K562 (cell line): ENCODE measurements at regions of chr12 and their contacts with region 1.

Region 1: DNA sequence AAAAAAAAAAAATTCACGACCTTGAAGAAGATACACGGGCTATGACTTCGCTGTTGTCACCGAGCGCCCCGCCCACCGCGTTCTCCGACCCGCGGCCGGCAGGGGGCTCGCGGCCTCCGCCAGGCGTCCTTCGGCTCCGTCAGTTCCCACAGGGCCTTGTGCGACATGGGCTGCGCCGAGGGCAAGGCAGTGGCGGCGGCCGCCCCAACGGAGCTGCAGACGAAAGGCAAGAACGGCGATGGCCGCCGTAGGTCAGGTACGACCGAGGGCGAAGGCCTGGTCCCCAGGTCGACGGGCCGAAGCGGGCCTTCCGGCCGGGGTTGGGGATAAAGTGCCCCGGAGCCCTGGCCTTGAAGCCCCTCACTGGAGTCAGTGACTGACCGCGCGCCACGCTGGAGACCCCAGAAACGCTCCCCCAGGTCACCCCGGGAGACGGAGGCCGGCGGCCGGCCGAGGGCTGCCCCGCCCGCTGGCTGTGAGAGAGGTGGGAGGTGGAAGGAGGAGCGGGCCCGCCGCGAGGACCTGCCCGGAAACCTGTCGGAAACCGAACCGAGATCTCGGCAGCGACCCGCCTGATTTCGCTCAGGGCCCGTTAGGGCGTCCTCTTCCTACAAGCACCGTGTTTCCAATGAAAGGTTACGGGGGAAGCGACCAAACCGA is at the start of gene TXNRD1:
- DNase-seq: peak; percentile 84 to 90 (median 86)
- ATAC-seq: peak; percentile 99
- H3K4me3 ChIP-seq: peak within 1 kb of the TSS; percentile 20
- H3K27ac ChIP-seq: peak within 1 kb of the TSS; percentile 13; the same call in 1 of the 3 replicates
- H3K4me1 ChIP-seq: peaks cover 11% of the 10 kb centered on the region in 2 experiments; a peak in 4 of 5 replicates
- H3K27me3 ChIP-seq: no peaks in the 10 kb centered on the region; a peak in 1 of 5 replicates
- CTCF ChIP-seq: peak; percentile 92 to 94 (median 93)
- EP300 ChIP-seq: no peak
- POLR2A ChIP-seq: 0 out of 2 replicates have a peak, but pooled peaks have one; percentile 51
- RAD21 ChIP-seq: peak; percentile 90 to 94
- polyA plus RNA-seq, gene TXNRD1: 114 to 189 TPM

Region 2: GRCh38 chr12:104250366-104251125 is 34.8 kb after region 1 on chr12:
- CTCF ChIA-PET with region 1: no interaction called
- POLR2A ChIA-PET with region 1: no interaction called
- in situ Hi-C with region 1: no loop called
- intact Hi-C with region 1: loop called (anchors 5 kb)
- DNase-seq: no peak
- ATAC-seq: no peak
- H3K4me3 ChIP-seq: no peak overlapping the region
- H3K27ac ChIP-seq: no peak overlapping the region; the same call in 2 of the 3 replicates
- H3K4me1 ChIP-seq: peaks cover 4 to 6% of the 10 kb centered on the region in 2 experiments; a peak in 3 of 5 replicates
- H3K27me3 ChIP-seq: no peaks in the 10 kb centered on the region
- CTCF ChIP-seq: no peak
- EP300 ChIP-seq: no peak
- POLR2A ChIP-seq: no peak
- RAD21 ChIP-seq: no peak

Region 3: DNA sequence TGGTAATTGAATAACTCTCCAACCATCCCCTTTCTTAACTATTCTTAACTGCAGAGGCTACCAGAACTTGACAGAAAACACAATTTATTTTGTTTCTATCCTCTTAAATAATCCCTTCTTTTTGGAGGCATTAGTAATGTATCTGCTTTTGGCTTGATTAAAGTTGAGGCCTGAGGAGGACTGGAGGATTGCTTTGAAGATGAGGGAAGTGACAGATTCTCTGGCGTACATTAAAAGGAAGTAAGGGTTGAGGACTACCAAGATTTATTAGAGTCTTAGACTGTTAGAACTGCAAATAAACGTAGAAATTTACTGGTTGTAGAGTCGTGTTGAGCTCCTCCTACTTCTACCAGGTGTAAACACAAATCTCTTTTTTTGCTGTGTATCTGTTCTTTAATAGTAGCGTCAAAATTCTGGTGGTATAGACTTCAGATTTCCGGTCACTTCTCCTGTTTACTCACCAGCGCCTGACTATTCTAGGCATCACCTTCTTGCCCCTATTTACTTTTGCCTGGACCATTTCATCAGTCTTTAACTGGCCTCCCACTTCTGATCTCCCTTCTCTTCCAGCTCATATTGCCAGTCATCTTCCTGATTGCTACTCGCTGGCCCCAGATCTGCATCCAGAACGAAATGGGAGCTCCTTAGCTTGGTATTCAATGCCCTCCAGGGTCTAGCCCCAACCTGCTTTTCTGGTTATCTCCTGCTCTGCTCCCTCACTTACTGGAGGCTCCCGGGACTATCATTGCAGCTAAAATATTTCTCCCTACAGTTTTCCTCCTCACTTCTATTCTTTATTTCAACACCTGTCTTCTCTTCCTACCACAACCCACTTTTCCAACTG is 79.3 kb after region 1 on chr12:
- CTCF ChIA-PET with region 1: no interaction called
- POLR2A ChIA-PET with region 1: interaction called, 67 read pairs
- in situ Hi-C with region 1: loop called (anchors 10 kb)
- intact Hi-C with region 1: no loop called
- DNase-seq: no peak
- ATAC-seq: no peak; the same call in 2 of the 3 replicates
- H3K4me3 ChIP-seq: no peak overlapping the region
- H3K27ac ChIP-seq: no peak overlapping the region
- H3K4me1 ChIP-seq: no peaks in the 10 kb centered on the region; a peak in 2 of 5 replicates
- H3K27me3 ChIP-seq: no peaks in the 10 kb centered on the region
- CTCF ChIP-seq: no peak
- EP300 ChIP-seq: no peak
- POLR2A ChIP-seq: no peak
- RAD21 ChIP-seq: no peak

Region 4: DNA sequence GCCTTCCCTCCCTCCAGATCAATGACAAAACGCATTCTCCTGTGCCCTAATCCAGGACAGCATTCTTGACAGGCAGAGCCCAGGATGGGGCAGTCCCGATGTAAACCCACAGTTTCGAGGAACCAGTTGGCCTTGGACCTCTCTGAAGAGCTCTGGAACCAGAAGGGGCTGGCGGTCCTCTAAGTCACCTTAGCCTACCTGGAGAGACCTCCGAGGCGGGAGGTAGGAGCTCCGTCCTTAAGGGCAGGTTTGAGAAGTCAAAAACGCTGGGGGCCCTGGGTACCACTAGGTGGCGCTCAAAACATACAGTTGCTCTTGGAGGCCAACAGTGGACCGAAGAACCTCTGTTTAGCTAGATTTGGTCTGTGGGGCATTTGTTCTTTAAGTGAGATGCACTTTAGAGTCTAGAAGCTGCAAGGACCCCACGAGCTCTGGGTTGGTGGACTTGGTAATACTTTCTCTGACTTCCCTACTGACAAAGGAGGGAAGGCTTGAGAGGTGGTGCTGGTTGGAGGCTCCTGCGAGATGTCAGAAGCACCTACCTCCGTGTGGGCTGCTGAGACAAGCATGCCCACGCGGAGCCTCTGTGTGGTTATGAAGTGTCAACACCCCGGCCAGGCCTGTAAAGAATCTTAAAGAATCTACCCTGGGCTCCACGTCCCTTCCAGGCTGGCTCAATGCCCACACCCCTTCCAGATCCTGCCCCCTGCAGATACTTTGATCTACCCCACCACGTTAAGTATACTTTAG is 166.1 kb after region 1 on chr12:
- CTCF ChIA-PET with region 1: no interaction called
- POLR2A ChIA-PET with region 1: no interaction called
- in situ Hi-C with region 1: no loop called
- intact Hi-C with region 1: no loop called
- DNase-seq: peak; percentile 79 to 89 (median 81)
- ATAC-seq: peak; percentile 97
- H3K4me3 ChIP-seq: no peak overlapping the region
- H3K27ac ChIP-seq: no peak overlapping the region
- H3K4me1 ChIP-seq: peaks cover 0 to 3% of the 10 kb centered on the region in 2 experiments; a peak in 3 of 5 replicates
- H3K27me3 ChIP-seq: no peaks in the 10 kb centered on the region
- CTCF ChIP-seq: peak; percentile 90 to 95 (median 95)
- EP300 ChIP-seq: no peak
- POLR2A ChIP-seq: no peak
- RAD21 ChIP-seq: peak; percentile 98

Region 5: DNA sequence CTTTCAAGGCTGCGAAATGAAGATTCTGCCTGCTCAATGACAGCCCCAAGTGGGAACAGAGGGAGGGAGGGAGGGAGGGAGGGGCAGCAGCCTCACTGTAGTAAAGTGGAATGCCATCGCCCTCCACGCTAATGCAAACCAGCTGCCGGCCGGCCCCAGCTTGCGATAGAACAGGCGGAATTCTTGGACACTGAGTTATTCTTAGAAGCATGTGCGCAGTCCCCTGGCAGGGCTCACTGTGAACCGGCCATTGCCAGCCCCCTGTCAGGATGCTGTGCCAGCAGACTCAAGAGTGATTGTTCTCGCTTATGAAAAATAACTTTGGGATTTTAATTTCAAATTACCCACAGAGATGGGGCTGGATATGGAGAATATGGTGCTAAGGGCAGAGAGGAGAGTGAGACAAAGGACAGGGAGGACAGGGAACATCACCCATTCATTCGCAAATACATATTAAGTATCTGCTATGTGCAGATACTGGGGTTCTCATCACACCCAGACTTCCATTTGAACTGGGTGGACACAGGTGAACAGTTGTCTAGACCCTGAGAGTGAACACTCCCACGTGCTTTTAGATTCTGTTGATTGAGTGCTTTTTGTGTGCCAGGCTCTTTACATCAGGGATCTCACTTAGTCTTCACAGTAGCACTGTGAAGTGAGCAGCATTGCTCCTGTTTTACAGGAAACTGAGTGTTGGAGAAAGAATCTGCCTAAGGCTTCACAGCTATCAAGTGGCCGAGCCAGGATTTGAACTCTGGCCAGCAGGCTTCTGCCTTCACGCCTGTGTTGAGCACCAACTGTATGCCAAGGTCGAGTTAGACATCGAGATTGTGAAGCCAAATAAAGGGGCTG is 1307.6 kb after region 1 on chr12:
- CTCF ChIA-PET with region 1: no interaction called
- POLR2A ChIA-PET with region 1: no interaction called
- in situ Hi-C with region 1: no loop called
- intact Hi-C with region 1: no loop called
- DNase-seq: no peak
- ATAC-seq: no peak
- H3K4me3 ChIP-seq: no peak overlapping the region
- H3K27ac ChIP-seq: no peak overlapping the region
- H3K4me1 ChIP-seq: no peaks in the 10 kb centered on the region
- H3K27me3 ChIP-seq: no peaks in the 10 kb centered on the region
- CTCF ChIP-seq: no peak
- EP300 ChIP-seq: no peak
- POLR2A ChIP-seq: no peak
- RAD21 ChIP-seq: no peak